ENCODE measurements at regions of chr7 and their contacts with region 1.

Region 1: DNA sequence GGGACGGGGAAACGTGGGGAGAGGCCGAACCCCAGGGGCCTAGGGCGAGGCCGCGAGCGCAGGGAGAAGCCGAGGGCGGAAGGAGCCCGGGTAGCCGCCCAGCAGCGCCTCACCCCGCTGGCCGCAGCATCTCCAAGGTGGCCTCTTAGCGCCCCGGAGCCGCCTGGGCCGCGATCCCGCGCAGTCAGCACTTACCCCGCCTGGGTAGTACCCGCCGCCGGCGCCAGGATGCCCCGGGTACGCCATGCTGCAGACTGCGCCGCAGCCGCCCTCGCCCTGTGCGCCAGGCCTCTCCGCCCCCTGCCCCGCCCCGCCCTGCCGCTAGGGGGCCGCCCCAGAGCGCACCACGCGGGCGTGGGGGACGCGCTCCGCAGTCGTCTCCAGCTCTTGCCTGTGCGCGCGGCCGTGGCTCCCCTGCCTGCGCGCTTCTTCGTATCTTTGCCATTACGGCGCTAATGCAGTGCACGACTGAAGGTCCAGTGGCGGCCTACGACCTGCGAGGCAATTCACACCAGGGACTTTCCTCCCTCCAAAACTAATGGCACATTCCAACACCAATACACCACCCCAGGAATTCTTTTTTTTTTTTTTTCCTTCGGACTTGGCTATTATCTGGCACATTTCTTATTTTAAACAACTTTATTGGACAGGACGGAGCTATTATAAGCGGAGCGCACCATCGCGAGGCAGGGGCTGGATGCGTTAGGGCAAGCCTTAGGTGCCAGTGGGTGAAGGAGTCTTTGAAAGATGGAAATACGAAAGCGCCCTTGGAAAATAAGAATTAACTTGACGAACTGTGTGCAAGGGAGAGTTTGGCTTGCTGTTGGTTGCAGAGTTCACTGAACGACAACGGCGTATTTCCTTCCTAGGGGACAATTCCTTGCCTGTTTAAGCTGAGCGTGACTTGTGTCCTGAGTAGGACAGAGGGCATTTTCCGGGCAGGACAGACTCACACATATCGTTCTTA is at the start of gene SRI:
- DNase-seq: peak; percentile 68 to 95
- H3K4me3 ChIP-seq: peak within 1 kb of the TSS; percentile 85
- CTCF ChIP-seq: no peak
- POLR2A ChIP-seq: no peak
- total RNA-seq, gene SRI: 24.6 to 43.9 (median 42.2) TPM

Region 2: GRCh38 chr7:86939197-86939814 is 1280.8 kb before region 1 on chr7:
- intact Hi-C with region 1: loop called (anchors 10 kb)
- DNase-seq: peak in 1 of 2 donors; percentile 58
- H3K4me3 ChIP-seq: no peak overlapping the region
- CTCF ChIP-seq: no peak
- POLR2A ChIP-seq: no peak

Measured in lower leg skin (tissue), 4 donors.